H1 (cell line): ENCODE measurements at regions of chr4 and their contacts with region 1.

Region 1: DNA sequence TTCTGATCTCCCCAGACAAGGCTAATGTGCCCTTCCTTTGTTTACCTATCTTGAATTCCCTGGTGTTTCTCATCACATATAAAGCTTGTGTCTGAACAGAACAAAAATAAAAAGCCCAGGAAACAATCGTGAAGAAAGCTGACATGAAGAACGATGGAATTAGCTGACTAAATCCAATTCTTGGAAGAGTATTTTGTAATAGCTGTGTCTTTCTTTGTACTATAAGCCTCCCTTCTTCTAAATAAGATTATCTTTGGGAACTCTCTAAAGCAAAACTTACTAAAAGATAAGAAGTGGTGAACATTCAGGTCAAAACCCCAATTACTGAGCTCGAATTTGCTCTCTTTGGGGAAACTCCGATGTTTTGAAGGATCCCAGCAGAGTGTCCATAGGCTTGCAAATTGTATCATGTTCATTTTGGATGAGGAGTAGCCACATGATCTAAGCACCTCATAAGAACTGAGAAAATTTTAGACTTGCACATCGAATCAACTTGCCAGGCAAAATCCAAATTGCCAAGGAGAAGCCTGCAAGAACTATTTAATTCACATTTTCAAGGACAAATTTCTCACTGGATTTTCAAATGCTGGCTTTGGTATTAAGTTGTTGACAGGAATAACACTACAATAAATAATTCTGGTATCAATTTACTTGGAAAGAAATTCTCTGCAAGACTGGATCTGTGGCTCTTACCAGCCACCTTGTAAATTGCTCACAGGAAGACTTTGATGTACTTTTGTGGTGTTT is 106.2 kb downstream of the LNX1 start:
- DNase-seq: no peak
- H3K4me3 ChIP-seq: no peak overlapping the region
- H3K27ac ChIP-seq: no peak overlapping the region
- H3K4me1 ChIP-seq: peaks cover 0 to 2% (median 0%) of the 10 kb centered on the region in 4 experiments; a peak in 2 of 7 replicates
- H3K27me3 ChIP-seq: no peaks in the 10 kb centered on the region
- CTCF ChIP-seq: no peak
- EP300 ChIP-seq: no peak
- POLR2A ChIP-seq: no peak
- RAD21 ChIP-seq: no peak

Region 2: GRCh38 chr4:53497487-53498244 is 12.6 kb after region 1 on chr4:
- CTCF ChIA-PET with region 1: interaction called, 54 read pairs
- POLR2A ChIA-PET with region 1: no interaction called
- DNase-seq: no peak
- H3K4me3 ChIP-seq: no peak overlapping the region
- H3K27ac ChIP-seq: no peak overlapping the region
- H3K4me1 ChIP-seq: peaks cover 0 to 7% (median 3%) of the 10 kb centered on the region in 4 experiments; a peak in 5 of 7 replicates
- H3K27me3 ChIP-seq: no peaks in the 10 kb centered on the region
- CTCF ChIP-seq: no peak
- EP300 ChIP-seq: no peak
- POLR2A ChIP-seq: no peak
- RAD21 ChIP-seq: no peak

Region 3: DNA sequence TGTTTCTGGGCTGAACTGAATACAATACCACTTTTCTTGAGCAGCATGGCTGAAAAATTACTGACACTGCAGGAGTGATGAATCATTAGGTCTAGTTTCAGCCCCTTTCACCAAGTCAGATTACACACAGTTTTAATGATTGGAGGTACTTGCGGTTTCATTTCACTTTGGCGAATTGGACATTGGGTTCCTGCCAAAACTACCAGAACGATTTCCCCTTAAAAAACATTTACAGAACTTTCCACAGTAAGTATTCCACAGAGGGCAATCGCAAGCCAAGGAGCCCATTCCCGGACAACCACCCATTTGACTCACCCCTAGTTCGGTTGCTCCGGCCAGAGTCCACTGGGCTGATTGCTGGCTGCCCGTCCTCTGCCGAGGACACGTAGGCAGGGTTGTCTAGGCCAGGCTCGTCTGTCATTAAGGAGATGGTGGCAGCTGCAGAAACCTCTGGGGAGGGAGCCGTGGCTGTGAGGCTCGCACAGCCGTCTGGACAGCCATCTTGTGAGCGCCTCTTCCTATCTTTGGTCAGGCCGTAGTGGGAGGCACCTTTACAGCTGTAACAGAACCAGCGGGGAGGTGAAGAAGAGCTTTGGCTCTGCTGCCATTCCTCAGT is 22.7 kb after region 1 on chr4:
- CTCF ChIA-PET with region 1: interaction called, 54 read pairs
- POLR2A ChIA-PET with region 1: no interaction called
- DNase-seq: no peak
- H3K4me3 ChIP-seq: no peak overlapping the region
- H3K27ac ChIP-seq: no peak overlapping the region
- H3K4me1 ChIP-seq: no peaks in the 10 kb centered on the region
- H3K27me3 ChIP-seq: no peaks in the 10 kb centered on the region
- CTCF ChIP-seq: no peak
- EP300 ChIP-seq: no peak
- POLR2A ChIP-seq: no peak
- RAD21 ChIP-seq: no peak